Breast epithelium (tissue), 4 donors: ENCODE measurements at regions of chr16 and their contacts with region 1.

Region 1: GRCh38 chr16:3780570-3780969 is 63.2 kb upstream of the TRAP1 start:
- DNase-seq: no peak
- H3K4me3 ChIP-seq: no peak overlapping the region
- H3K27ac ChIP-seq: no peak overlapping the region
- H3K4me1 ChIP-seq: no peaks in the 10 kb centered on the region
- H3K27me3 ChIP-seq: no peaks in the 10 kb centered on the region
- CTCF ChIP-seq: no peak
- POLR2A ChIP-seq: no peak

Region 2: GRCh38 chr16:3611146-3611975 is 169.2 kb before region 1 on chr16 and contains the start of gene SLX4:
- intact Hi-C with region 1: no loop called
- DNase-seq: peak; percentile 82 to 86
- H3K4me3 ChIP-seq: peak within 1 kb of the TSS; percentile 74 to 99 (median 95)
- H3K27ac ChIP-seq: peak within 1 kb of the TSS; percentile 76 to 90
- H3K4me1 ChIP-seq: peaks cover 0 to 6% of the 10 kb centered on the region in 2 donors
- H3K27me3 ChIP-seq: no peaks in the 10 kb centered on the region
- CTCF ChIP-seq: no peak
- POLR2A ChIP-seq: no peak
- total RNA-seq, gene SLX4: 3.0 to 4.3 (median 3.7) TPM

Region 3: DNA sequence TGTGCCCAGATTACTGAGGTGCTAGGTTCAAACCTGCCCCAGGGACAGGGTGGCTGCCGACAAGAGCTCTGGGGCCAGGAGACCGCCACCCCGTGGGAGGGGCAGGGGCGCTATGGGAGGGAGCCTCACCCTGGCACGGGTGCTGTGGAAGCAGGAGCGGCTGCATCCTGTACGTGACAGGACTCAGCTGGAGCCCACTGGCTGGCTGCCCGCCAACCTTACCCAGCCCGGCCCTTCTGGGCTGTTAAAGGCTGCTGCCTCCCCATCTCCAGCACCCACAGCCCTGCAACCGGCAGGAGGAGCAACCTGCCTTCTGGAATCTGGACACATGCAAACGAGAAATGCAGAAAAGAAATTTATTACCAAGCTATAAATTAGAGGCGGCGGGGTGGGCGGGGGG is 559.3 kb after region 1 on chr16:
- intact Hi-C with region 1: loop called (anchors 10 kb)
- DNase-seq: no peak
- H3K4me3 ChIP-seq: no peak overlapping the region
- H3K27ac ChIP-seq: no peak overlapping the region
- H3K4me1 ChIP-seq: no peaks in the 10 kb centered on the region
- H3K27me3 ChIP-seq: no peaks in the 10 kb centered on the region
- CTCF ChIP-seq: no peak
- POLR2A ChIP-seq: no peak